ENCODE measurements at regions of chr2 and their contacts with region 1.

Region 1: DNA sequence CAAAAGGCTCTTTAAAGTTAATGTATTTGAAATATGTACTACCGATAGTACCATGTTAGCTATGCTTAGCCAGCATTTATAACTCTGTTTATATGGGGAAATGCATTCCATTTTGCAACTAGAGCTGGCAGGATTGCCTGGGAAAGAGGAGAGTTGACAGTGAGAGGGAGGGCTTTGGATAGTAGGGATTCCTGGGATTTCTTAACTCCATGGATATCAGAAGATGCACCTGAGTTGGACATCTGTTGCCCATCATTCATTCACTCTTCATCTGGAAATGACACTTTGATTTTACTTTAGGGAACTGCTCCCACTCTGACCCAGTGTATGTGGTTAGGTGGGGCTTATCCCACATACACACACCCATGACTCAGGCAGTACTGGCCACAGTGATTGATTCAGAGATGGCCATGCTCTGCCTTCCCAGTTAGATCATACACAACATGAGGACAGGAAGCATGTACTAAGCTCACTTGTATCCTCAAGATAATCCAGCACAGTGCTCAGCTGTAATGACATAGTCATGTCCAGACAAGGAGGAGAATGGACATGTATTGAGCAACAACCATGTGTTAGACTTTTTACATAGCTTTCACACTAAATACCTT is 248.8 kb downstream of the MREG start:
- DNase-seq: no peak
- ATAC-seq: peak; percentile 15
- H3K4me3 ChIP-seq: no peak overlapping the region
- H3K4me1 ChIP-seq: no peaks in the 10 kb centered on the region
- CTCF ChIP-seq: no peak

Region 2: DNA sequence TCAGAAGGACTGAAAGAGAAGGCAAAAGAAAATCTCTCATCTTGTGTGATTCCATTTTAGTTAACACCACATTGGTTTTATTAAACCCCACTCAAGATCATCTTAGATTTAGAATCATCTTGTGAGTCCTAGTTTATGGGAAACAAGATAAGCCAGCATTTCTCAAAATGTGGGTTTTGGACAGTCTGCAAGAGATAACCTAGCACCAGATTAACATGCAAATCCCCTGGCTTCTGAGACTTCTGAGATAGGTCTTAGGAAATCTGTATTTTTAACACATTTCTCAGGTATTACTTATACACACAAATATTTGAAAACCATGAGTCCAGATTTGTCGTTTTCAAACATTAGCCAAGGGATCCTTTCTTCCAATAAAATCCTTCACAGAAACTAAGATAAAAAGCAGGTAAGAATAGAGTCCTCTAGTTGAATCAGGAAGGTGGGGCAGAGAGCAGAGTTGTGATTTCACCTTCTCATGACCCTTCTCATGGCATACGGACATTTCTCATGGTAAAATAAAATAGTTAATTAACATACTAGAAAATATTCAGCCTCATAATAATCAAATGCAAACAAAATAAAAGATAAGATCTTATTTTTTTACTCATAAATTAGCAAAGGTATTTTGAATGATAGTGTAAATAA is 41.4 kb before region 1 on chr2:
- intact Hi-C with region 1: loop called in 1 of 2 experiments (anchors 5 kb)
- DNase-seq: no peak
- ATAC-seq: no peak
- H3K4me3 ChIP-seq: no peak overlapping the region
- H3K4me1 ChIP-seq: no peaks in the 10 kb centered on the region
- CTCF ChIP-seq: no peak

Measured in mucosa of descending colon (tissue), 3 donors.